ENCODE measurements at regions of chr3 and their contacts with region 1.

Region 1: GRCh38 chr3:55485211-55485791 is 1.8 kb downstream of the WNT5A start:
- DNase-seq: peak; percentile 75
- H3K4me3 ChIP-seq: peak overlapping the region; percentile 78
- H3K27ac ChIP-seq: peak overlapping the region; percentile 74
- H3K4me1 ChIP-seq: peaks cover 65% of the 10 kb centered on the region
- H3K27me3 ChIP-seq: peaks cover 97% of the 10 kb centered on the region
- CTCF ChIP-seq: peak; percentile 80

Region 2: GRCh38 chr3:55746808-55747413 is 261.6 kb after region 1 on chr3:
- intact Hi-C with region 1: loop called (anchors 5 kb)
- DNase-seq: no peak
- H3K4me3 ChIP-seq: no peak overlapping the region
- H3K27ac ChIP-seq: no peak overlapping the region
- H3K4me1 ChIP-seq: no peaks in the 10 kb centered on the region
- H3K27me3 ChIP-seq: no peaks in the 10 kb centered on the region
- CTCF ChIP-seq: peak; percentile 54